HAP-1 (cell line): ENCODE measurements at regions of chr9 and their contacts with region 1.

Region 1: DNA sequence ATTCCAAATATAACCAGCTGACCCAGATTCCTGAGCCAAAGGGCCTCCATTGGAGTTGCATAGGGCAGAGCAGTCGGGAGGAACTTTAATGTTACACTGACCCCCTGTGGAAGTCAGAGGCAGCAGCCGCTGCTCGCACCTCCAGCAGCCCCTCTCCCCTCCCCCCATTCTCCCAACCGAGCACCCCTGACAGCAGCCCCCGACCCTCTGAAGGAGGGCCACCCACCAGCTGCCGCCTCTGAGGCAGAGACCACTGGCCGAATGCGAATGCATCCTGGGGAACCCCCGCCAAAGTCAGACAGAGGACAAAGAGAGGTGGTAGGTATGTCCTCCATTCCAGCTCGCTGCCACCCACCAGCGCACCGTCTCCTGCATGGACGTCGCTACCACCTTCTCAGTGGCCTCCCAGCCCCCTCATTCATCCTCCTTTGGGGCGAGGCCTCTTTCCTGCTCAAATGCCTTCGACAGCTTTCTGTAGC is 231.0 kb downstream of the CDK5RAP2 start:
- DNase-seq: peak; percentile 45 to 66
- H3K4me3 ChIP-seq: no peak overlapping the region
- H3K4me1 ChIP-seq: no peaks in the 10 kb centered on the region
- H3K27me3 ChIP-seq: no peaks in the 10 kb centered on the region; the same call in 1 of the 2 replicates

Region 2: GRCh38 chr9:119968836-119969707 is 379.9 kb before region 1 on chr9:
- in situ Hi-C with region 1: loop called (anchors 25 kb)
- DNase-seq: peak; percentile 31 to 77
- H3K4me3 ChIP-seq: no peak overlapping the region
- H3K4me1 ChIP-seq: no peaks in the 10 kb centered on the region
- H3K27me3 ChIP-seq: no peaks in the 10 kb centered on the region

Region 3: GRCh38 chr9:120265791-120266190 is 83.2 kb before region 1 on chr9:
- in situ Hi-C with region 1: no loop called
- DNase-seq: no peak
- H3K4me3 ChIP-seq: no peak overlapping the region
- H3K4me1 ChIP-seq: no peaks in the 10 kb centered on the region
- H3K27me3 ChIP-seq: no peaks in the 10 kb centered on the region

Region 4: GRCh38 chr9:120289990-120290975 is 58.7 kb before region 1 on chr9:
- in situ Hi-C with region 1: no loop called
- DNase-seq: no peak
- H3K4me3 ChIP-seq: no peak overlapping the region
- H3K4me1 ChIP-seq: no peaks in the 10 kb centered on the region
- H3K27me3 ChIP-seq: no peaks in the 10 kb centered on the region

Region 5: GRCh38 chr9:120655005-120655622 is 306.1 kb after region 1 on chr9:
- in situ Hi-C with region 1: no loop called
- DNase-seq: no peak
- H3K4me3 ChIP-seq: no peak overlapping the region
- H3K4me1 ChIP-seq: peaks cover 9% of the 10 kb centered on the region
- H3K27me3 ChIP-seq: no peaks in the 10 kb centered on the region